ENCODE measurements at regions of chr1 and their contacts with region 1.

Region 1: GRCh38 chr1:65958561-65959350 is 166.1 kb downstream of the PDE4B start:
- DNase-seq: peak; percentile 47
- ATAC-seq: peak; percentile 52

Region 2: GRCh38 chr1:66048011-66048410 is 89.3 kb after region 1 on chr1:
- intact Hi-C with region 1: no loop called
- DNase-seq: no peak
- ATAC-seq: no peak

Region 3: DNA sequence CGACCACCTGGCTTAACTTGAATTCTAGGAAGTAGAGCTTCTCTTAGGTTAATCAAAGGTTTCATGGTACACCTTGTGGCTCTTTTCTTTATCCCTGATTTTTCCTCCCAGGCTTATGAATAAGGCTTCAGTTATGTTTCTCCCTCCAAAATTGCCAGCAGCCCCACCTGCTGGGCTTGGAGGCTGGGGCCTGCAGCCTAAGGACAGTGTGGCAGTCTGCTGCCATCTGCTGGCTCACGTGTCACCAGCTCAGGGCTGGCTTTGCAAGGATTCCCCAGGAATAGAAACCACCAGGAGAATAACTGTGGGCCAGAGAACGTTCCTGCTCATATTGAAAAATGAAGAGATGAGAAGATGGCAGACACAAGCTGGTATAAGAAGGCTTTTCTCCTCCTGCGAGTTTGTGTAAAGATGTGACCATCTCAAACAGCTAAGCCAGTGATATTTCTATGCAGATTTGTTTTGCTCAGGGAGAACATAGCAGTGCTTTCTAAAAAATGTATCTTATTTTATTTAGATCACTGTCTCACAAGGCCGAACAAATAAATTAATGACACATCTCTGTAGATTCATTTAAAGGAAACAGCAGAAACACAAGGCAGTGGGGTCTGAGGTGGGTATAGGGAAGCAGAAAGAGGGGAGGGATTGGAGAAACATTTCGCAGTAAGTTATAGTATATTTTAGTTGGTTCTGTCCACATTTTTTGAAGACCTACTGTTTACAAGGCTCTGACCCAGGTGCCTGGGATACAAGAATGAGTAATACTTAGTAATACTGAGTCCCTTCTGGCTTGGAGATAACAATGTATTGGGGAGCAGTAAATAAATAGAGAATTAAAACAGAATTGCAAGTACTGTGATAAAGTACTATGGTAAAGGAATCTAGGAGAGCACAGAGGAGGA is 284.1 kb after region 1 on chr1:
- intact Hi-C with region 1: loop called (anchors 2 kb)
- DNase-seq: peak; percentile 89
- ATAC-seq: peak; percentile 99

Region 4: DNA sequence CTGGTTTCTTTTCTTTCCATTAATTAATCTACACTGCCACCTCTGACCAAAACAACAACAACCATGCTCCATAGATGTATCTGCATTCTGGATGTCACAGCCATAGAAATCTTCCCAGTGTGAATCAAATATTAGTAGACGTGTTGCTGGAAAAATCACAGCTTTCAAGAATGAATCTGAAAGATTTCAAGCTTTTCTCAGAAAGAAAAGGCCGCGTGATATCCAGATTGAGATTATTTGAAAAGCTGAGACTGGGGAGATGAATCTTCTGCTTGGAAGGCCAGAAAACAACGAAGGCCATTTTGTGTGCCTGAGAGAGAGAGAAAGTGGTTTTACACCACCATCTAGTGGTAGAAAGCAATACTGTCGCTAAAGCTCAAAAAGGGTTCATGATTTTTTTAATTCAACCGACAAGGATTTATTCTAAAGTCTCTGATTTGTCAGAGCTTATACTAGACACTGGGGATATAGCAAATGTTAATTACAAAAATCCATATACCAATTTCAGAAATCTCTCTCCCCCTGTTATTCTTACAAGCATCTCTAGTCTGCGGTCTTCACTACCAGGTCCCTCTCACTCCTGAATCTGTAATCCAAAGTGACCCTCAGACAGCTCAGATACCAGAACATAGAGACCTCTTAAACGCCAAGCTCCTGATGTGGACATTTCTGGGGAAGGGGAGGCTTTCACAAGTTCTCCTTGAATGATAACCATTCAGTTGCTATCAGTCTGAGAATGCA is 487.7 kb after region 1 on chr1:
- intact Hi-C with region 1: loop called (anchors 5 kb)
- DNase-seq: no peak
- ATAC-seq: peak; percentile 73

Measured in Right ventricle myocardium superior (tissue), 1 donor.